ENCODE measurements at regions of chr5 and their contacts with region 1.

Region 1: GRCh38 chr5:138575194-138576015 is at the start of gene HSPA9:
- DNase-seq: peak; percentile 98
- H3K4me3 ChIP-seq: peak within 1 kb of the TSS; percentile 96
- CTCF ChIP-seq: no peak

Region 2: DNA sequence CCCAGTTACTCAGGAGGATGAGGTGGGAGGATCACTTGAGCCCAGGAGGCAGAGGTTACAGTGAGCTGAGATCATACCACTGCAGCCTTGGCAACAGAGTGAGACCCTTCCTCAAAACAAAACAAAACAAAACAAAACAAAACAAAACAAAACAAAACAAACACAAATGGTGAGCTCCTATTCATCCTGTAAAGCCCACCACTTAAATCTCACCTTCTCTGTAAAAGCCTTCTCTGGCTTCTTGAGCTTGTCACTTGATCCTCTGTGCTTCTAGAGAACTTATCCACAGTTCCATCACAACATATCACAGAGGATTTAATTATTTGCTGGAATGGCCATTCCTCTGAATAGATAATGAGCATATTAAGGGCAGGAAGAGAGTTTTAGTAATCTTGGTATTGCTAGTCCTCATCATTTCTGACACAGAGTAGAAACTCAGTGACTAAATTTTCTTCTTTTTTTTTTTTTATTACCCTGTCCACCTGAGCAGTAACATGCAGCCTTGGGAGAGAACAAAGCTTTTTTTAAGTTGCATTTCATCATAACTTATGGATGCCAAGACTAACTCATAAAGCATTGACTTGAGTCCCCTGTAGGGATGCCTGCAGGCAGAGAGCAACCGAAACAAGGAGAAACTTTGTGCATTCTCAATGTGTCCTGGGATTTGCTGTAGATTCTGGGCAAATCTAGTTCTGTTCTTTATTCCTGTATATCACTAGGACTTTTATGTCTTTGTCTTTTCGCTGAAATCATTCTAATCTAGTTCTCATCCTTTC is 12.8 kb after region 1 on chr5:
- CTCF ChIA-PET with region 1: interaction called, 10 read pairs
- POLR2A ChIA-PET with region 1: no interaction called
- DNase-seq: no peak
- H3K4me3 ChIP-seq: no peak overlapping the region
- CTCF ChIP-seq: no peak

Region 3: DNA sequence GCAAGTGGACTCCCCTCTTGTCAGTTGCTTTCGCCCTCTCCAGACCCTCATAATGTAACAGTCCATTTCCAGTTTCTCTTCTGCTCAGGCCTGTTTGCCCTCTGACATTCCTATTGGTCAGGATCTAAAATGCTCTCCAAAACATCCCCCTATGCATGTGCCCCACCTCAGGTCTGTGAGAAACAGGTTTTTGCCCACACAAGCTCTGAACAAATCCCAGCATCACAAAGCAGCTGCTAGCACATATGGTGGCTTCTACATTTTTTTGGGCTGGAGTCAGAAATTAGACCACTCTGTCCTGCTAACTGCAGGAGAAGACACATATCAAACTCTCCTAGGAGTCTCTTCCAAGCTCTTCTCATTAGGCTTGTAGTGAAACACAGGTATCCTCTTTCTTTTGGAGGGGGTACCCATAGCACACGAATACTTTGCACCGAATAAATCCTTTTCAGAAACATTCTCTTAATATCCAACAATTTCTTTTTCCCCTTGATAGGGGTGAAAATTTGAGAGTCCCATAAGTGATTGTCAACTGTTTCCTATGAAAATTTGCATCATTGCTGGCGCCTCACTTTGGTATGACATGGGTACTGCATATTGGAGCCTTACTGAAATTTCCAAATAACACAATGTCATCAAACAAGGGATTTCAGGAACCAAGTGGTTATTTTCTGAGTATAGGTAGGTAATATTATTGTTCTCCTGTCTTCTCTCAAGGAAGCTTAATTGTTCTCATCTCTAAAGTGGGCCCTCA is 19.1 kb after region 1 on chr5:
- CTCF ChIA-PET with region 1: interaction called, 23 read pairs
- POLR2A ChIA-PET with region 1: interaction called, 3 read pairs
- DNase-seq: no peak
- H3K4me3 ChIP-seq: no peak overlapping the region
- CTCF ChIP-seq: peak; percentile 6

Region 4: DNA sequence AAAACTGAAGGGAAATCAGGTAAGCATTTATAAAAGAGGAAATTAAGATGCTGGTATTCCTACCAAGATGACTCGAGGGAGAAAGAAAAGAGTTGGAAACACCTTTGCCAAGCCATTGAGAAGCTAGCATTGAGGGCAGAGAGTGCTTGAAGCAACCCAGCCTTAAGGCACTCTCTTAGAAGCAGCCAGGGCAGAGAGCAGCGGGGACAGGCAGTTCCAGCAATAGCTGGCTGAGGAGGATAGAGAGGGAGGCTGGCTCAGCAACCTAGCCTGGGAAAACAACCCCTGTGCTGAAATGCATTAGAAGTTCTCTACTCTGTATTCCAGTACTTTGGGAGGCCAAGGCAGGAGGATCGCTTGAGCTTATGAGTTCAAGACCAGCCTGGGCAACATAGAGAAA is 40.1 kb after region 1 on chr5:
- CTCF ChIA-PET with region 1: interaction called, 10 read pairs
- POLR2A ChIA-PET with region 1: no interaction called
- DNase-seq: no peak
- H3K4me3 ChIP-seq: no peak overlapping the region
- CTCF ChIP-seq: no peak

Region 5: DNA sequence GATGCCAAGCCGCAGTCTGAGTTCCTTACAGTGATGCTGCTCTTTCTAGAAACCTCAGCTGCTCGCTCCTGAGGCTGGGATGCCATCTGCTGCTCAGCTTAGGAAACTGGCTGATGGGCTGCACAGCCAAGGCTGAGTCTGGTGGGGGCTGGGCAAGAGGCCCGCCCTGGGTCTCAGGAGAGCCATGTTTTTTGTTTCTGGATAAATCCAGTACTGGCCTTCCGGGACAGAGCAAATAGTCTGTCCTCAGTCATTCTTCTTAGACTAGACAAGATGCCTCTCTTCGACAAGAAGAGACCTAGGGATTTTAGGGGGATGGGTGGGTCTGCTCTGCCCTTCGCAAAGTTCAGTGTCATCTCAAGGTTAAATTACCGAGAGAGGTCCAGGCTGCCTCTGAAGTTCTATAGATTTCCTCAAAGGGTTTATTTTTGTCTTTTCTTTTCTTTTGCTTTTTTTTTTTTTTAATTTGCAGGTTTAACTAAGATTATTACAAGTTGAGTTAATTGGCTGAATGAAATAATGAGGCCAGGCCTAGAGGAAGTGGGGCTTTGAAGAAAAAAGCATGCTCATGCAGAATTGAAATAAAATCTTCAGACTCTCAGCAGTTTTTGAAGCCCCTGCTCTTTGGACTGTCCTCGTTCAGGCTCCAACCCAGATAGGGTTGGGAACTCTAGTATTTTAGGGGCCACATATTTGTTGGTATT is 687.5 kb after region 1 on chr5:
- CTCF ChIA-PET with region 1: interaction called, 42 read pairs
- POLR2A ChIA-PET with region 1: no interaction called
- DNase-seq: peak; percentile 64
- H3K4me3 ChIP-seq: no peak overlapping the region
- CTCF ChIP-seq: peak; percentile 96

Region 6: DNA sequence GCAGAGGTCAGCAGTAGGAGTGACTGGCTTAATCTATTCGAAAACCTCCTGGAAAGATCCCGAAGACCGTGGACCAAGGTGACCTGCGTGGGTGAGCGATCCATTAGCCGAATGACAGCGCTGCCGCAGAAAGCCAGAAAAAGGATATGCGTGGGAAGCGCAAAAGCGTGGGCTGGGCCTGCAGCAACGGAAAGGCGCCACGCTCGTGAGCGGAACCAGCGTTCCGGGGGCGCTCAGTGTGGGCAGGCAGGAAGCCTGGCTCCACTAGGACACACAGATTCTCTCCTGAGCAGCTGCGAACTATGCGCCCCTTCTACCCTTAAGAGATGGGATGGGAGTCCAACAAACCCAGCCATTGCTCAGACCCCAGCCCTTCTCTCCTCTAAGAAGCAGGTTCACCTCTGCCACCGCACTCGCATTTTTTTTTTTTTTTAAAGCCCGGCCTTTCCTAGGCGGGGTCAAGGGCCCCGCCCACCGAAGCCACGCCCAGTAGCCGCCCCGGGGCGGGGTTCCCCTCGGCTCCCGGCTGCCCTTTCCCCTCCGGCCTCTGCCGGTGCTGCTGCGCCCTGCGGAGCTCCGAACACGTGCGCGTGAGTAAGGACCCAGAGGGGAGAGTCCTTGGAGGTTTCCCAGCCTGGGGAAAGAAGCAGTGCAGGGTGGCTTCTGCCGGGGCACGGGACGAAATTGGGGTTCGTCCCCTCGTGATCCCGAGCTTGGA is 698.3 kb after region 1 on chr5:
- CTCF ChIA-PET with region 1: interaction called, 14 read pairs
- POLR2A ChIA-PET with region 1: no interaction called
- DNase-seq: no peak
- H3K4me3 ChIP-seq: peak overlapping the region; percentile 74
- CTCF ChIP-seq: no peak